ENCODE measurements at regions of chr17 and their contacts with region 1.

Region 1: GRCh38 chr17:64145757-64146417 is 15.9 kb upstream of the ERN1 start:
- DNase-seq: peak; percentile 100
- ATAC-seq: peak; percentile 78
- H3K4me3 ChIP-seq: peak overlapping the region; percentile 75 to 86 (median 84)
- H3K27ac ChIP-seq: peak overlapping the region; percentile 88
- H3K4me1 ChIP-seq: peaks cover 55% of the 10 kb centered on the region
- H3K27me3 ChIP-seq: no peaks in the 10 kb centered on the region; a peak in 1 of 5 replicates
- CTCF ChIP-seq: no peak; the same call in none of the 2 replicates
- EP300 ChIP-seq: peak in 1 of 2 experiments; percentile 25; a peak in 1 of 4 replicates
- POLR2A ChIP-seq: peak; percentile 100
- RAD21 ChIP-seq: peak; percentile 74

Region 2: DNA sequence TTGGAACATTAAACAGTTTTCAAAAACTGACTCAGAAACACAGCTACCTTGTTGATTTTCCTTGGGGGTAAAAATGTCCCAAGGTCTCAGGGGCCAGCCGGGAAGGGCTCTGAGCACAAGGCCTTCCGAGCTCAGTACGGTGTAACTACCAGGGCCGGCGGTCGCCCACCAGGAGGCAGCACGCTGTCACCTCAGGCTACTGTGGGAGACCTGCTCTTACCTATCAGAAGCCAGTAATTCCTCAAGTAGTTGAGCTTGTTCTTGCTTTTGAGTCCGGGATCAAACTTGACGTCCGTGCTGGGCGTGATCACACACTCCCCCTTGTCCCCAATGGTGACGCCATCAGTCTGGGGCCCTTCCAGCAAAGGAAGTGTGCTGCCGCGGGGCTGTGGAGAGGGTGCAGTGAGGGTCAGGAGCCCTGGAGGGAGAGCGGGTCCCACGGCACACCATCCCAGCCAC is 82.1 kb before region 1 on chr17:
- CTCF ChIA-PET with region 1: no interaction called
- POLR2A ChIA-PET with region 1: interaction called, 12 read pairs
- in situ Hi-C with region 1: no loop called
- intact Hi-C with region 1: no loop called
- DNase-seq: peak; percentile 48
- ATAC-seq: peak; percentile 97
- H3K4me3 ChIP-seq: no peak overlapping the region
- H3K27ac ChIP-seq: no peak overlapping the region
- H3K4me1 ChIP-seq: peaks cover 15% of the 10 kb centered on the region
- H3K27me3 ChIP-seq: no peaks in the 10 kb centered on the region
- CTCF ChIP-seq: peak; percentile 94
- EP300 ChIP-seq: no peak
- POLR2A ChIP-seq: no peak
- RAD21 ChIP-seq: peak; percentile 92

Region 3: DNA sequence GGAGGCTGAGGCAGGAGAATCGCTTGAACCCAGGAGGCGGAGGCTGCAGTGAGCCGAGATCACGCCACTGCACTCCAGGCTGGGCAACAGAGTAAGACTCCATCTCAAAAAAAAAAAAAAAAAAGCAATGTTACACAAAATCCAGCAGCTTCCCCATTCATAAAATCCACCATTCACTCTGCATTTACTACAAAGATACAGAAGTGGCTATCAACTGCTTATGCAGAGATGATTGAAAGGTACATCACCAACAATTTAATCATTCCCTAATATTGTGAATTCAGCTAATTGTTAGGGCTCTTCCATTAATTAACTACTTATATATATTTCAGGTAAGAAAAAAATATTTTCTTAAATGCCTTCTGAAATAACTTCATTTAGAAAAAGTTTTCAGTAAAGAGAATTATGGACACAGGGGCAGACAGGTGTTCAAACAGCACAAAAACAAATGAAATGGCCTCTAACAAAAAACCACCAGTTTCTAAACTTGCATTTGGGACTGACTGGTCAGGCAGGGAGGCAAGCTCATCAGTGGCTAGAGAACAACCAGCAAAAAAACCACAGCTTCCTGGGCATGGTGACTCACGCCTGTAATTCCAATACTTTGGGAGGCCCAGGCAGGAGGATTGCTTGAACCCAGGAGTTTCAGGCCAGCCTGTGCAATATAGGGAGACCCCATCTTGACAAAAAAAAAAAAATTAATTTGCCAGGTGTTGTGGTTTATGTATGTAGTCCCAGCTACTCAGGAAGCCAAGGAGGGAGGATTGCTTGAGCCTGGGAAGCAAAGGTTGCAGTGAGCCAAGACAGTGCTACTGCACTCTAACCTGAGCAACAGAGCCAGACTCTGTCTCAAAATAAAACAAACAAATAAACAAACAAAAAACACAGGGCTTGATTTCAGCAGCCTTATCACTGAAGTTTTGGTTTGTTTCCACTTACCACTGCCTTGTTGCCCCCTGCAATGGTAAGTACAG is 42.2 kb before region 1 on chr17:
- CTCF ChIA-PET with region 1: no interaction called
- POLR2A ChIA-PET with region 1: no interaction called
- in situ Hi-C with region 1: no loop called
- intact Hi-C with region 1: no loop called
- DNase-seq: no peak
- ATAC-seq: no peak
- H3K4me3 ChIP-seq: no peak overlapping the region
- H3K27ac ChIP-seq: no peak overlapping the region
- H3K4me1 ChIP-seq: peaks cover 70% of the 10 kb centered on the region
- H3K27me3 ChIP-seq: no peaks in the 10 kb centered on the region
- CTCF ChIP-seq: no peak
- EP300 ChIP-seq: no peak
- POLR2A ChIP-seq: no peak
- RAD21 ChIP-seq: no peak

Region 4: GRCh38 chr17:64129764-64130558 is 15.9 kb before region 1 on chr17 and contains the start of gene ERN1:
- CTCF ChIA-PET with region 1: no interaction called
- POLR2A ChIA-PET with region 1: interaction called, 138 read pairs
- in situ Hi-C with region 1: no loop called
- intact Hi-C with region 1: no loop called
- DNase-seq: peak; percentile 82
- ATAC-seq: peak; percentile 95
- H3K4me3 ChIP-seq: peak within 1 kb of the TSS; percentile 79 to 96 (median 89)
- H3K27ac ChIP-seq: peak within 1 kb of the TSS; percentile 81
- H3K4me1 ChIP-seq: peaks cover 84% of the 10 kb centered on the region
- H3K27me3 ChIP-seq: no peaks in the 10 kb centered on the region; a peak in 1 of 5 replicates
- CTCF ChIP-seq: peak; percentile 40
- EP300 ChIP-seq: 0 out of 4 replicates have a peak, but pooled peaks of 1 of the 2 experiments have one; percentile 6
- POLR2A ChIP-seq: peak; percentile 94 to 99
- RAD21 ChIP-seq: peak; percentile 62
- total RNA-seq, gene ERN1: 4.1 and 6.0 TPM in 2 replicates

Region 5: GRCh38 chr17:64183815-64184214 is 37.9 kb after region 1 on chr17:
- CTCF ChIA-PET with region 1: no interaction called
- POLR2A ChIA-PET with region 1: interaction called, 39 read pairs
- in situ Hi-C with region 1: loop called (anchors 5 kb)
- intact Hi-C with region 1: loop called (anchors 1 kb)
- DNase-seq: no peak
- ATAC-seq: no peak
- H3K4me3 ChIP-seq: no peak overlapping the region
- H3K27ac ChIP-seq: no peak overlapping the region
- H3K4me1 ChIP-seq: peaks cover 49% of the 10 kb centered on the region
- H3K27me3 ChIP-seq: no peaks in the 10 kb centered on the region
- CTCF ChIP-seq: no peak
- EP300 ChIP-seq: no peak
- POLR2A ChIP-seq: no peak
- RAD21 ChIP-seq: no peak

Region 6: GRCh38 chr17:64262417-64263260 is 116.8 kb after region 1 on chr17 and contains the start of gene TEX2:
- CTCF ChIA-PET with region 1: no interaction called
- POLR2A ChIA-PET with region 1: interaction called, 80 read pairs
- in situ Hi-C with region 1: loop called (anchors 5 kb)
- intact Hi-C with region 1: loop called (anchors 5 kb)
- DNase-seq: peak; percentile 39
- ATAC-seq: peak; percentile 73
- H3K4me3 ChIP-seq: peak within 1 kb of the TSS; percentile 92 to 96 (median 92)
- H3K27ac ChIP-seq: peak within 1 kb of the TSS; percentile 82
- H3K4me1 ChIP-seq: peaks cover 57% of the 10 kb centered on the region
- H3K27me3 ChIP-seq: no peaks in the 10 kb centered on the region; a peak in 2 of 5 replicates
- CTCF ChIP-seq: no peak; the same call in none of the 2 replicates
- EP300 ChIP-seq: no peak
- POLR2A ChIP-seq: peak; percentile 43 to 72
- RAD21 ChIP-seq: peak; percentile 34; the same call in 1 of the 2 replicates
- total RNA-seq, gene TEX2: 33.6 and 37.7 TPM in 2 replicates

Region 7: GRCh38 chr17:64506576-64507477 is 360.9 kb after region 1 on chr17 and contains the start of gene CEP95:
- CTCF ChIA-PET with region 1: no interaction called
- POLR2A ChIA-PET with region 1: interaction called, 16 read pairs
- in situ Hi-C with region 1: no loop called
- intact Hi-C with region 1: no loop called
- DNase-seq: peak; percentile 97
- ATAC-seq: peak; percentile 75
- H3K4me3 ChIP-seq: peak within 1 kb of the TSS; percentile 94 to 100 (median 99)
- H3K27ac ChIP-seq: peak within 1 kb of the TSS; percentile 99
- H3K4me1 ChIP-seq: peaks cover 43% of the 10 kb centered on the region
- H3K27me3 ChIP-seq: peaks cover 0 to 3% of the 10 kb centered on the region in 2 experiments; a peak in 1 of 5 replicates
- CTCF ChIP-seq: no peak
- EP300 ChIP-seq: peak in 1 of 2 experiments; percentile 8; a peak in 2 of 4 replicates
- POLR2A ChIP-seq: peak; percentile 75 to 87
- RAD21 ChIP-seq: 0 out of 2 replicates have a peak, but pooled peaks have one; percentile 34
- total RNA-seq, gene CEP95: 31.9 and 68.8 TPM in 2 replicates